Left ventricle myocardium inferior (tissue), 1 donor: ENCODE measurements at regions of chr3 and their contacts with region 1.

Region 1: GRCh38 chr3:124935264-124935663 is 713 bp upstream of the MUC13 start:
- DNase-seq: no peak
- H3K4me3 ChIP-seq: no peak overlapping the region
- H3K27ac ChIP-seq: no peak overlapping the region
- H3K4me1 ChIP-seq: no peaks in the 10 kb centered on the region
- H3K27me3 ChIP-seq: no peaks in the 10 kb centered on the region
- CTCF ChIP-seq: no peak

Region 2: GRCh38 chr3:124986158-124987143 is 51.2 kb after region 1 on chr3:
- intact Hi-C with region 1: no loop called
- DNase-seq: no peak
- H3K4me3 ChIP-seq: no peak overlapping the region
- H3K27ac ChIP-seq: peak overlapping the region; percentile 80
- H3K4me1 ChIP-seq: peaks cover 47% of the 10 kb centered on the region
- H3K27me3 ChIP-seq: no peaks in the 10 kb centered on the region
- CTCF ChIP-seq: peak; percentile 59

Region 3: DNA sequence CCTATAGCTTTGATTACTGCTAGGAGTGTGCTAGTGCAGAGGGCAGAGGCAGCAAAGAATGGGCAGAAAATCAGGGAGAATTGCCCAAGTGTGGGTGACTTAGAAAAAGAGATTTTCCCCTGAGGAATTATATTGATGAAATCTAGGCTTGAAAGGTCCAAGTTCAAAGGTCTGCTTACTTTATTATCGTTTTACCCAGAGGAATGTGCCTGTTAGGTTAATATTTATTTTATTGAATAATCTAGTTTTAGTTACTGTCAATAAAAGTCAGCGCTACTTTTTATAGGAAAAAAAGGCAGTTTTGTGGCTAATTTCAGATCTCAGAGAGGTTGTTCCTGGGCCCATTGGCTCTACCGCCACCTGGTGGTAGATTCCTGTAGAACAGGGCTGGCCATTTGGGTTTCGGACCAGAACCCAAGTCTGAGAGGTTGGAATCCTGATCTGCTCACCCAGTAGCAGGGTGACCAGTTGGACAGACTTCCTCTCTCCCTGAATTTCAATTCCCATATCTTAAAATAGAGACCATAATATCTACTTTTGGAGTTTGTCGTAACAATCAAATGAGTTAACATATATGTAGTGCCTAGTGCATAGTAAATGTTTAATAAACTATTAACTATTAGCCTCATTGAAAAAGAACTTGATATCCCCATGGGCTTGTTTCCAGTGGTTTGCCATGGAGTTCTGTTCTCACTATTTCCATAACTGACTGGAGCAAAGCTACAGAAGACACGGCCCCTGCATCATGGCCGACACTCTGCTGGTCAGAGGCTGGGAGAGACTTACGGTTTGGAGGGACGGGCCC is 502.6 kb after region 1 on chr3:
- intact Hi-C with region 1: loop called (anchors 10 kb)
- DNase-seq: peak; percentile 41
- H3K4me3 ChIP-seq: no peak overlapping the region
- H3K27ac ChIP-seq: no peak overlapping the region
- H3K4me1 ChIP-seq: no peaks in the 10 kb centered on the region
- H3K27me3 ChIP-seq: no peaks in the 10 kb centered on the region
- CTCF ChIP-seq: peak; percentile 99